ENCODE measurements at regions of chrX and their contacts with region 1.

Region 1: DNA sequence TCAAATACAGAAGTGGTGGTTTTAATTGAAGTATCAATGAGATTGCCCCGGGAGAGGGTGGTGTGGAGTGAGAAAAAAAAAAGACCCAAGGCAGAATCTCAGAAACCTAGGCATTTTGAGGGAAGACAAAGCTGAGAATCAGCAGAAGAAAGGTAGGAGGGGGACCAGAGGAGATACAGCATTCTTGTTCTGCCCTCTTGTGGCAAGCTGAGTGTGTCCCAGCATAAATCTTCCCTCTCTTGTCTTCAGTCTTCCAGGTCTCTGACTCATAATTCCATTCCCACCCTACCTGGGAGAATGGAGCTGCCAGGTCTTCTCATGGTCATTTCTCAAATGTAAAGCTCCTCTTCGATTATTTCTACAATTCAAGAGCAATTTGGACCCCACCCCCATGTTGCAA is 32.7 kb upstream of the MAGED1 start:
- DNase-seq: peak; percentile 38
- H3K4me3 ChIP-seq: no peak overlapping the region
- H3K27ac ChIP-seq: no peak overlapping the region
- H3K4me1 ChIP-seq: no peaks in the 10 kb centered on the region
- H3K27me3 ChIP-seq: no peaks in the 10 kb centered on the region
- CTCF ChIP-seq: peak; percentile 34 to 59

Region 2: GRCh38 chrX:51614353-51615012 is 246.2 kb before region 1 on chrX:
- CTCF ChIA-PET with region 1: no interaction called
- dilution Hi-C with region 1: no loop called
- in situ Hi-C with region 1: no loop called
- intact Hi-C with region 1: loop called (anchors 1 kb)
- DNase-seq: peak; percentile 14
- H3K4me3 ChIP-seq: no peak overlapping the region
- H3K27ac ChIP-seq: no peak overlapping the region
- H3K4me1 ChIP-seq: no peaks in the 10 kb centered on the region
- H3K27me3 ChIP-seq: peaks cover 8% of the 10 kb centered on the region
- CTCF ChIP-seq: peak; percentile 67 to 68

Region 3: DNA sequence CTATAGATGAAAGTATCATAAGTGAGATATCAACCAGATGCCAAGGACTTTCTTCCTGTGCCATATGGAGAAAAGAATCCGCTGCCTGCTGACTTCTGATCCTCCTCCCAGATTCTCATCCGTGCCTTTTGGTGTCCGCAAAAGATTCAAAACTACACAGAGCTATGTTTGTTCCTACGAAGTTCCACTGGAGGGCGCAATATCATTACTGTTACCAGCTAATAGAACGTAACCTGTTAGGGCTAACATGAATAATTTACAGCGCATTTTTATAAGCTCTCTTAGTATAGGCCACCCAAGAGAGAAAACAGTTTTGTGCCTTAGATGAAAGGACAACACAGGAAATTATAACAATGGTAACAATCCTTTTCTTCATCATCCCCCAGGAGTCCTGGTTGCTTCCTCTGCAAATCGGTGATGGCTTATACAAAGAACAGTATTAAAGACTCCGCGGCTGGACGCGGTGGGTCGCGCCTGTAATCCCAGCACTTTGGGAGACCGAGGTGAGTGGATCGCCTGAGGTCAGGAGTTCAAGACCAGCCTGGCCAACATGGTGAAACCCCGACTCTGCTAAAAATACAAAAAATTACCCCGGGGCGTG is 219.2 kb before region 1 on chrX:
- CTCF ChIA-PET with region 1: interaction called, 12 read pairs
- dilution Hi-C with region 1: no loop called
- in situ Hi-C with region 1: loop called in 1 of 2 experiments (anchors 25 kb)
- intact Hi-C with region 1: loop called (anchors 1 kb)
- DNase-seq: peak; percentile 19
- H3K4me3 ChIP-seq: no peak overlapping the region
- H3K27ac ChIP-seq: no peak overlapping the region
- H3K4me1 ChIP-seq: no peaks in the 10 kb centered on the region
- H3K27me3 ChIP-seq: peaks cover 3% of the 10 kb centered on the region
- CTCF ChIP-seq: peak; percentile 49 to 57

Region 4: DNA sequence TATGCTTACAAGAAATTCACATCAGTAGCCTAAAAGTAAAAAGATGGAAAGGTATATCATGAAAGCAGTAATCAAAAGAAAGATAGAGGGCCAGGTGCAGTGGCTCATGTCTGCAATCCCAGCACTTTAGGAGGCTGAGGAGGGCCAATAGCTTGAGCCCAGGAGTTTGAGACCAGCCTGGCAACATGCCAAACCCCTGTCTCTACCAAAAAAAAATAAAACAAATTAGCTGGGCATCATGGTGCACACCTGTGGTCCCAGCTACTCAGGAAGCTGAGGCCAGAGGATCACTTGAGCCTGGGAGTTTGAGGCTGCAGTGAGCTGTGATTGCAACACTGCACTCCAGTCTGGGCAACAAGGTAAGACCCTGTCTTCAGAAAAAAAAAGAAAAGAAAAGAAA is 62.0 kb before region 1 on chrX:
- CTCF ChIA-PET with region 1: no interaction called
- dilution Hi-C with region 1: no loop called
- in situ Hi-C with region 1: no loop called
- intact Hi-C with region 1: no loop called
- DNase-seq: no peak
- H3K4me3 ChIP-seq: no peak overlapping the region
- H3K27ac ChIP-seq: no peak overlapping the region
- H3K4me1 ChIP-seq: no peaks in the 10 kb centered on the region
- H3K27me3 ChIP-seq: no peaks in the 10 kb centered on the region
- CTCF ChIP-seq: no peak